ENCODE measurements at regions of chr3 and their contacts with region 1.

Region 1: GRCh38 chr3:16884084-16884747 is 539 bp upstream of the PLCL2 start:
- DNase-seq: peak; percentile 81 to 91
- ATAC-seq: peak; percentile 79 to 90 (median 86)
- H3K4me3 ChIP-seq: peak overlapping the region; percentile 97
- H3K27ac ChIP-seq: peak overlapping the region; percentile 99
- H3K4me1 ChIP-seq: peaks cover 61% of the 10 kb centered on the region
- H3K27me3 ChIP-seq: no peaks in the 10 kb centered on the region
- CTCF ChIP-seq: peak; percentile 64

Region 2: DNA sequence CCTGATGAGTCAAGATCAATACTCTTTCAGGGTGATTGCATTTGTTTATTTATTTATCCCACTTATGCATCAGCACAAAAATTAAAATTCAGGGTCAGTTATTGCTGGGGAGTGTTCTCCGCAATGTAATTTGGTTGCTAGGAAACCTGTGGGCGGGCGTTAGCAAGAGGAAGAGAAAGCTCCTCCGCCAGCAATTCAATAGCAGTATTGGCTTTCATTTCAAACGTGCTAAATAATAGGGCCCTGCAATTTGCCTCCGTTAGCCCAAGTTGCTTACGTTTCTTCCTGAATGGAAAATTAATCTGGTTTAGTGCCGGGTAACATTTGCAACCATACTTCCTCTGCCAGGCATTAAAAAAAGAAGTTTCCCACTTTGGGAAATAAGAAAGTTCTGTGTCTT is 35.0 kb before region 1 on chr3:
- intact Hi-C with region 1: loop called in 1 of 2 experiments (anchors 2 kb)
- DNase-seq: peak; percentile 52 to 69
- ATAC-seq: peak; percentile 56 to 86 (median 66)
- H3K4me3 ChIP-seq: peak overlapping the region; percentile 47
- H3K27ac ChIP-seq: peak overlapping the region; percentile 74
- H3K4me1 ChIP-seq: peaks cover 43% of the 10 kb centered on the region
- H3K27me3 ChIP-seq: no peaks in the 10 kb centered on the region
- CTCF ChIP-seq: no peak

Region 3: GRCh38 chr3:17088602-17089313 is 204.5 kb after region 1 on chr3:
- intact Hi-C with region 1: loop called in 1 of 2 experiments (anchors 5 kb)
- DNase-seq: no peak
- ATAC-seq: peak; percentile 36 to 45 (median 42)
- H3K4me3 ChIP-seq: peak overlapping the region; percentile 4
- H3K27ac ChIP-seq: peak overlapping the region; percentile 87
- H3K4me1 ChIP-seq: peaks cover 64% of the 10 kb centered on the region
- H3K27me3 ChIP-seq: no peaks in the 10 kb centered on the region
- CTCF ChIP-seq: no peak

Measured in psoas muscle (tissue), 8 donors.